Activated B cell treated with CpG ODN at 0.5 μM for 24 hours (primary cell): ENCODE measurements at regions of chr7 and their contacts with region 1.

Region 1: GRCh38 chr7:24587848-24588247 is 14.6 kb downstream of the PALS2 start:
- DNase-seq: no peak
- ATAC-seq: peak; percentile 62
- H3K4me3 Mint-ChIP-seq: no peak overlapping the region
- H3K27ac Mint-ChIP-seq: no peak overlapping the region
- H3K4me1 Mint-ChIP-seq: peaks cover 14% of the 10 kb centered on the region
- H3K27me3 Mint-ChIP-seq: no peaks in the 10 kb centered on the region
- CTCF ChIP-seq: no peak

Region 2: DNA sequence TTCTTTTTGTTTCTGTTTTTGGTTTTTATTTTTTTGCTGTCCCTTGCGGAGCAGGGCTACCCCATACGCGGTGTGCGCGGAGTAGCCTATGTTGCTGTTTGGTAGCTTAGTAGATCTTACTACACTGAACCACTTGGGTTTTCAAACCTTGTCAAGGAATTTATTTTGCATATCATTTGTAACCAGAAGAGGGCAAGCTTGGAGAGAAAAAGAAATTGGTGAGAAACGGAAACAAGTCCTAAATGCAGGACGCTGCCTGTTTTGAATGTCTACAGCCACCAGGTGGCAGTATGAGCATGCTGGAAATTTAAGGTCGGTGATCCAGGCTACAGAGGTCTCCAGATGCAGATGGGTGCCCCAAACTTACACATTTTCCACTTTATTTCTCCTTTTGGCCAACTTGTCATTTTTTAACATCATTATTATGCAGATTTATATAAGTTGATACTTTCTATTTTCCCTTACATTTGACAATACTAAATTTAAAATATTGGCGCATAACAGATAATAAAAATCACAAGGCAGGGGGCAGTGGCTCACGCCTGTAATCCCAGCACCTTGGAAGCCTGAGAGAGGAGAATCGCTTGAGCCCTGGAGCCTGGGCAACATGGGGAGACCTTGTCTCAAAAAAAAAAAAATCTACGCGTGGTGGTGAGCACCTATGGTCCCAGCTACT is 1040.8 kb before region 1 on chr7:
- CTCF ChIA-PET with region 1: no interaction called
- POLR2A ChIA-PET with region 1: no interaction called
- intact Hi-C with region 1: loop called (anchors 1 kb)
- DNase-seq: peak; percentile 40
- ATAC-seq: peak; percentile 91
- H3K4me3 Mint-ChIP-seq: no peak overlapping the region
- H3K27ac Mint-ChIP-seq: no peak overlapping the region
- H3K4me1 Mint-ChIP-seq: peaks cover 18% of the 10 kb centered on the region
- H3K27me3 Mint-ChIP-seq: no peaks in the 10 kb centered on the region
- CTCF ChIP-seq: no peak

Region 3: GRCh38 chr7:23696916-23697441 is 890.9 kb before region 1 on chr7:
- CTCF ChIA-PET with region 1: interaction called, 4 read pairs
- POLR2A ChIA-PET with region 1: no interaction called
- intact Hi-C with region 1: loop called (anchors 5 kb)
- DNase-seq: peak; percentile 38
- ATAC-seq: peak; percentile 60
- H3K4me3 Mint-ChIP-seq: no peak overlapping the region
- H3K27ac Mint-ChIP-seq: no peak overlapping the region
- H3K4me1 Mint-ChIP-seq: no peaks in the 10 kb centered on the region
- H3K27me3 Mint-ChIP-seq: no peaks in the 10 kb centered on the region
- CTCF ChIP-seq: no peak

Region 4: DNA sequence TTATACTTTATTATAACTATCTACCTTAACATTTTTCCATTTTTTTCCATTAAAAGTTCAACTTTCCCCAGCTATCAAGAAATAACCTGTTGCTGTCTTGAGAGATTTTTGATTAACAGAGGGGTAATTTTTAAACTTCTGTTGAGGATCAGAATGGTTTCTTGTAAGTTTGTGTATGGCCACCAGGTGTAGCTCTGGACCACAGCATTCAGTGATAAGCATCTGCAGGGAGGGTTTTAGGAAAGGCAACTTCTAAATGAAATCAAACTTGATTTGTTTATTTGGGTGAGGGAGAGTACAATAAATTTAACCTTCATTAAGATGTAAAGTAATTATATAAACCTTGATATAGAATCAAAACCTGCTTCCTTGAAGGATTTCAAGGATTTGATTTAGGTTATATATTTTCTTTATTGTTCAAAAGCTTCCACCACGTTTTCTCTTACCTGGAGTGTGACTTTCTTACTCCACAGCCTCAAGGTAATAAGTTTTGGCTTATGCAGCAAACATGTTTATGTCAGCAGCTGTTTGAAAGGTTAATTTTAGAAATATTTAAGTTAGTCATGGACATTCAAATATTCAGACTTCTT is 724.5 kb before region 1 on chr7:
- CTCF ChIA-PET with region 1: no interaction called
- POLR2A ChIA-PET with region 1: no interaction called
- intact Hi-C with region 1: loop called (anchors 1 kb)
- DNase-seq: no peak
- ATAC-seq: no peak
- H3K4me3 Mint-ChIP-seq: no peak overlapping the region
- H3K27ac Mint-ChIP-seq: no peak overlapping the region
- H3K4me1 Mint-ChIP-seq: no peaks in the 10 kb centered on the region
- H3K27me3 Mint-ChIP-seq: peaks cover 2% of the 10 kb centered on the region
- CTCF ChIP-seq: no peak

Region 5: GRCh38 chr7:24290004-24290641 is 297.7 kb before region 1 on chr7:
- CTCF ChIA-PET with region 1: interaction called, 6 read pairs
- POLR2A ChIA-PET with region 1: no interaction called
- intact Hi-C with region 1: loop called (anchors 1 kb)
- DNase-seq: no peak
- ATAC-seq: peak; percentile 90
- H3K4me3 Mint-ChIP-seq: no peak overlapping the region
- H3K27ac Mint-ChIP-seq: no peak overlapping the region
- H3K4me1 Mint-ChIP-seq: peaks cover 13% of the 10 kb centered on the region
- H3K27me3 Mint-ChIP-seq: peaks cover 34% of the 10 kb centered on the region
- CTCF ChIP-seq: no peak

Region 6: GRCh38 chr7:24401628-24402593 is 185.9 kb before region 1 on chr7:
- CTCF ChIA-PET with region 1: no interaction called
- POLR2A ChIA-PET with region 1: no interaction called
- intact Hi-C with region 1: loop called (anchors 1 kb)
- DNase-seq: no peak
- ATAC-seq: no peak
- H3K4me3 Mint-ChIP-seq: no peak overlapping the region
- H3K27ac Mint-ChIP-seq: no peak overlapping the region
- H3K4me1 Mint-ChIP-seq: peaks cover 6% of the 10 kb centered on the region
- H3K27me3 Mint-ChIP-seq: peaks cover 6% of the 10 kb centered on the region
- CTCF ChIP-seq: no peak